CD8-positive, alpha-beta T cell (primary cell): ENCODE measurements at regions of chr1 and their contacts with region 1.

Region 1: GRCh38 chr1:23691499-23692307 is at the start of gene RPL11:
- DNase-seq: peak; percentile 73 to 95 (median 88)
- ATAC-seq: peak; percentile 99
- H3K4me3 ChIP-seq: peak within 1 kb of the TSS; percentile 68 to 84
- H3K4me3 Mint-ChIP-seq: peak within 1 kb of the TSS; percentile 96
- H3K27ac ChIP-seq: peak within 1 kb of the TSS; percentile 74 to 87
- H3K27ac Mint-ChIP-seq: peak within 1 kb of the TSS; percentile 97
- H3K4me1 ChIP-seq: peaks cover 41% of the 10 kb centered on the region
- H3K4me1 Mint-ChIP-seq: peaks cover 46% of the 10 kb centered on the region
- H3K27me3 ChIP-seq: no peaks in the 10 kb centered on the region
- H3K27me3 Mint-ChIP-seq: no peaks in the 10 kb centered on the region
- CTCF ChIP-seq: peak; percentile 77
- total RNA-seq, gene RPL11: 2,153 to 2,178 TPM

Region 2: GRCh38 chr1:23019094-23019862 is 672.4 kb before region 1 on chr1 and contains the start of gene KDM1A:
- CTCF ChIA-PET with region 1: no interaction called
- POLR2A ChIA-PET with region 1: interaction called, 3 read pairs
- intact Hi-C with region 1: loop called in 1 of 2 experiments (anchors 2 kb)
- DNase-seq: peak; percentile 89 to 98 (median 95)
- ATAC-seq: peak; percentile 98
- H3K4me3 ChIP-seq: peak within 1 kb of the TSS; percentile 57 to 90
- H3K4me3 Mint-ChIP-seq: peak within 1 kb of the TSS; percentile 99
- H3K27ac ChIP-seq: peak within 1 kb of the TSS; percentile 41 to 69
- H3K27ac Mint-ChIP-seq: peak within 1 kb of the TSS; percentile 93
- H3K4me1 ChIP-seq: peaks cover 14% of the 10 kb centered on the region
- H3K4me1 Mint-ChIP-seq: peaks cover 46% of the 10 kb centered on the region
- H3K27me3 ChIP-seq: no peaks in the 10 kb centered on the region
- H3K27me3 Mint-ChIP-seq: no peaks in the 10 kb centered on the region
- CTCF ChIP-seq: no peak
- total RNA-seq, gene KDM1A: 42.2 to 46.2 TPM

Region 3: GRCh38 chr1:23591460-23592208 is 100.1 kb before region 1 on chr1:
- CTCF ChIA-PET with region 1: no interaction called
- POLR2A ChIA-PET with region 1: no interaction called
- intact Hi-C with region 1: no loop called
- DNase-seq: peak in 5 of 9 experiments; percentile 34 to 63 (median 46)
- ATAC-seq: peak; percentile 82
- H3K4me3 ChIP-seq: no peak overlapping the region
- H3K4me3 Mint-ChIP-seq: peak overlapping the region; percentile 42
- H3K27ac ChIP-seq: peak overlapping the region in 1 of 2 experiments; percentile 41
- H3K27ac Mint-ChIP-seq: peak overlapping the region; percentile 83
- H3K4me1 ChIP-seq: peaks cover 62% of the 10 kb centered on the region
- H3K4me1 Mint-ChIP-seq: peaks cover 64% of the 10 kb centered on the region
- H3K27me3 ChIP-seq: no peaks in the 10 kb centered on the region
- H3K27me3 Mint-ChIP-seq: no peaks in the 10 kb centered on the region
- CTCF ChIP-seq: no peak

Region 4: GRCh38 chr1:23701996-23702395 is 10.3 kb after region 1 on chr1:
- CTCF ChIA-PET with region 1: interaction called, 4 read pairs
- POLR2A ChIA-PET with region 1: interaction called, 10 read pairs
- intact Hi-C with region 1: no loop called
- DNase-seq: no peak
- ATAC-seq: no peak
- H3K4me3 ChIP-seq: no peak overlapping the region
- H3K4me3 Mint-ChIP-seq: no peak overlapping the region
- H3K27ac ChIP-seq: no peak overlapping the region
- H3K27ac Mint-ChIP-seq: peak overlapping the region; percentile 5
- H3K4me1 ChIP-seq: peaks cover 4% of the 10 kb centered on the region
- H3K4me1 Mint-ChIP-seq: peaks cover 30% of the 10 kb centered on the region
- H3K27me3 ChIP-seq: no peaks in the 10 kb centered on the region
- H3K27me3 Mint-ChIP-seq: no peaks in the 10 kb centered on the region
- CTCF ChIP-seq: no peak

Region 5: GRCh38 chr1:23743287-23744052 is 51.8 kb after region 1 on chr1 and contains the start of gene ELOA:
- CTCF ChIA-PET with region 1: interaction called, 3 read pairs
- POLR2A ChIA-PET with region 1: interaction called, 15 read pairs
- intact Hi-C with region 1: loop called (anchors 1 kb)
- DNase-seq: peak; percentile 39 to 90 (median 77)
- ATAC-seq: peak; percentile 95
- H3K4me3 ChIP-seq: peak within 1 kb of the TSS; percentile 70 to 91
- H3K4me3 Mint-ChIP-seq: peak within 1 kb of the TSS; percentile 91
- H3K27ac ChIP-seq: peak within 1 kb of the TSS; percentile 79 to 84
- H3K27ac Mint-ChIP-seq: peak within 1 kb of the TSS; percentile 93
- H3K4me1 ChIP-seq: peaks cover 34% of the 10 kb centered on the region
- H3K4me1 Mint-ChIP-seq: peaks cover 48% of the 10 kb centered on the region
- H3K27me3 ChIP-seq: no peaks in the 10 kb centered on the region
- H3K27me3 Mint-ChIP-seq: no peaks in the 10 kb centered on the region
- CTCF ChIP-seq: no peak
- total RNA-seq, gene ELOA: 41.5 to 43.3 TPM

Region 6: GRCh38 chr1:25239681-25240541 is 1548.2 kb after region 1 on chr1:
- CTCF ChIA-PET with region 1: no interaction called
- POLR2A ChIA-PET with region 1: no interaction called
- intact Hi-C with region 1: loop called in 1 of 2 experiments (anchors 10 kb)
- DNase-seq: peak; percentile 64 to 94 (median 82)
- ATAC-seq: peak; percentile 84
- H3K4me3 ChIP-seq: peak overlapping the region; percentile 37 to 60
- H3K4me3 Mint-ChIP-seq: peak overlapping the region; percentile 92
- H3K27ac ChIP-seq: peak overlapping the region; percentile 64 to 88
- H3K27ac Mint-ChIP-seq: peak overlapping the region; percentile 97
- H3K4me1 ChIP-seq: peaks cover 47% of the 10 kb centered on the region
- H3K4me1 Mint-ChIP-seq: peaks cover 61% of the 10 kb centered on the region
- H3K27me3 ChIP-seq: no peaks in the 10 kb centered on the region
- H3K27me3 Mint-ChIP-seq: no peaks in the 10 kb centered on the region
- CTCF ChIP-seq: peak; percentile 61